GM12878 (cell line): ENCODE measurements at regions of chr10 and their contacts with region 1.

Region 1: DNA sequence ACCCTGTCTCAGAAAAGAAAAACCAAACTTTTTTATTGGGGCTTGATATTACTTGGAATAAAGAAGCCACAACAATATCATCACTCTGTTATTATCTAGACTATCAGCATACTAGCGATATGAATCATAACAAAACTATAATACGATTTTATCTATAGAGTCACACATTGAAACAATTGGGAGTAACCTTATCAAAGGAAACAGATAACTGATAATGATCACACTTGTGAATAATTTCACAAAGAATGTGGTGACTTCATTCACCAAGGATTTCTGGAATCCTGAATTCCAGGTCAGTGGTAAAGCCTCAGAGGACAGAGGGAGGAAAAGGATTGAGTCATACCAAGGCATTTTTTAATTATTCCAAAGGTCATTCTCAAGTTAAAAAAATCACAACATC is 32.1 kb upstream of the NMT2 start:
- DNase-seq: no peak
- ATAC-seq: no peak
- H3K4me3 ChIP-seq: no peak overlapping the region
- H3K27ac ChIP-seq: no peak overlapping the region
- H3K4me1 ChIP-seq: no peaks in the 10 kb centered on the region
- H3K27me3 ChIP-seq: no peaks in the 10 kb centered on the region
- CTCF ChIP-seq: no peak
- EP300 ChIP-seq: no peak
- POLR2A ChIP-seq: no peak
- RAD21 ChIP-seq: no peak

Region 2: DNA sequence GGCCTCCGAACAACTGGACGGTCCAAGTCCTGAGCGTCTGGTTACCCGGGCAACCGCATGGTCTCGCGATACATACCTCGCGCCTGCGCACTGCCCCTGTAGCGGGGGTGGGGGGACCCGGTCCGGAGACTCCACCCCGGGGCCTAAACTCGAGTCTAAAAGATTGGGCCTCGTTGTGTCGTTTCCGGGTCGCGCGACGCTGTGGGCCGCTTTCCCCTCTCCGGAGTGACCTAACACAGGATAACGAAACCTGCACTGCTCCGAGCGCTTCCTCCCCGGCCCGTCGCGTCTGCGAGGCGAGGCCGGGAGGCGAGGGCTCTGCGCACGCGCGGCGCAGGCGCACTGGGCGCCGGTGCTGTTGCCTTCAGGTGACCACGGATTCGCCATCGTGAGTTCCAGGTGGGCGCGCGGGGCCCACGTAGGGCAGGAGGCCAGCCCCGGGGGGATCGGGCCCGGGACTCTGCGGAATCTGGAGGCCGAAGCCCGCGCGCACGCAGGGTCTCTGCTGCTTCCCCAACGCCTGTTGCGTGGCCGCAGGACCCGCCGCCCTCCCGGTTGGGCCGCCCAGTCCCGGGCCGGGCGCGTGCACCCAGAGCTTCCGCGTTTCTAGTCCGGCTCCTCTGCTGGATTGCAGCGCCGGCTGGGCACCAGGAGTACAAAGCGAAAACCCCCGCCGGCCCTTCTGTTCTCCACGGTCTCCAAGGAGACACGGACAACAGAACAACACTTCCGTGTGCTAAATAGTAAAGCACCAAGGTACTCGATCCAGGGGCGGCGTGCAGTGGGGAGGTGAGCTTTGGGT is 103.4 kb before region 1 on chr10 and contains the start of gene RPP38:
- CTCF ChIA-PET with region 1: no interaction called
- POLR2A ChIA-PET with region 1: interaction called, 10 read pairs
- RAD21 ChIA-PET with region 1: no interaction called
- SMC1A ChIA-PET with region 1: no interaction called
- in situ Hi-C with region 1: no loop called
- intact Hi-C with region 1: no loop called
- DNase-seq: peak; percentile 70
- ATAC-seq: peak; percentile 89
- H3K4me3 ChIP-seq: peak within 1 kb of the TSS; percentile 97
- H3K27ac ChIP-seq: peak within 1 kb of the TSS; percentile 70
- H3K4me1 ChIP-seq: peaks cover 5% of the 10 kb centered on the region
- H3K27me3 ChIP-seq: no peaks in the 10 kb centered on the region
- CTCF ChIP-seq: no peak
- EP300 ChIP-seq: no peak
- POLR2A ChIP-seq: peak; percentile 99
- RAD21 ChIP-seq: 0 out of 2 replicates have a peak, but pooled peaks have one; percentile 3
- polyA plus RNA-seq, gene RPP38: 27.7 to 38.4 TPM

Region 3: DNA sequence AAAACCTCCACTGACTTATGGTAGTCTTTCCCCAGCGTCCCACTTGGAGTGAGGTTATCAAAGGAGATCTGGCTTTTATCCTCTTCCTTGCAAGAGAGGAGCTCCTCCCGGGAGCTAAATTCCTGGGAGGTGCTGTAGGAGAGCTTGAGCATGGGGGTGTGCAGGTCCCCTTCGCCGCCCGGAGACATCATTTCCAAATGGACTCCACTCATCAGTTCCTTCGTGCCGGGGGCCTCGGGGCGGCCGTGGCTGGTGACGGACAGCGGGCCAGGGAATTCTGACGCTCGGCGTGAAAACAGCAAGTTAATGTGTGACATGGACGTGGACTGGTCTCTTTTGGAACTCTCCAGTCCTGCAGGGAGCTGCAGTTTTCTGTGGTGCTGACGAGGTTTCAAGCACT is 13.6 kb after region 1 on chr10:
- CTCF ChIA-PET with region 1: no interaction called
- POLR2A ChIA-PET with region 1: no interaction called
- RAD21 ChIA-PET with region 1: no interaction called
- SMC1A ChIA-PET with region 1: no interaction called
- in situ Hi-C with region 1: no loop called
- intact Hi-C with region 1: no loop called
- DNase-seq: no peak
- ATAC-seq: no peak
- H3K4me3 ChIP-seq: no peak overlapping the region
- H3K27ac ChIP-seq: no peak overlapping the region
- H3K4me1 ChIP-seq: no peaks in the 10 kb centered on the region
- H3K27me3 ChIP-seq: no peaks in the 10 kb centered on the region
- CTCF ChIP-seq: no peak
- EP300 ChIP-seq: no peak
- POLR2A ChIP-seq: no peak
- RAD21 ChIP-seq: no peak